ENCODE measurements at regions of chr12 and their contacts with region 1.

Region 1: GRCh38 chr12:47797441-47797840 is 22.3 kb downstream of the HDAC7 start:
- DNase-seq: peak in 2 of 3 donors; percentile 63 to 64
- ATAC-seq: peak; percentile 77 to 80 (median 78)
- H3K4me3 ChIP-seq: no peak overlapping the region
- H3K27ac ChIP-seq: no peak overlapping the region
- H3K4me1 ChIP-seq: peaks cover 0 to 6% (median 0%) of the 10 kb centered on the region in 4 donors
- H3K27me3 ChIP-seq: no peaks in the 10 kb centered on the region
- CTCF ChIP-seq: peak; percentile 50 to 59 (median 52)
- POLR2A ChIP-seq: no peak

Region 2: GRCh38 chr12:46998811-46999368 is 798.6 kb before region 1 on chr12:
- intact Hi-C with region 1: no loop called
- DNase-seq: no peak
- ATAC-seq: no peak
- H3K4me3 ChIP-seq: no peak overlapping the region
- H3K27ac ChIP-seq: no peak overlapping the region
- H3K4me1 ChIP-seq: peaks cover 0 to 3% (median under 1%) of the 10 kb centered on the region in 4 donors
- H3K27me3 ChIP-seq: no peaks in the 10 kb centered on the region
- CTCF ChIP-seq: no peak
- POLR2A ChIP-seq: no peak

Region 3: GRCh38 chr12:47837190-47838171 is 40.0 kb after region 1 on chr12:
- intact Hi-C with region 1: loop called in 1 of 2 experiments (anchors 5 kb)
- DNase-seq: peak in 2 of 3 donors; percentile 70
- ATAC-seq: peak; percentile 84 to 91 (median 89)
- H3K4me3 ChIP-seq: no peak overlapping the region
- H3K27ac ChIP-seq: no peak overlapping the region
- H3K4me1 ChIP-seq: no peaks in the 10 kb centered on the region
- H3K27me3 ChIP-seq: no peaks in the 10 kb centered on the region
- CTCF ChIP-seq: peak; percentile 88 to 94 (median 92)
- POLR2A ChIP-seq: no peak

Region 4: GRCh38 chr12:47954467-47955045 is 157.1 kb after region 1 on chr12:
- intact Hi-C with region 1: loop called in 1 of 2 experiments (anchors 5 kb)
- DNase-seq: no peak
- ATAC-seq: no peak
- H3K4me3 ChIP-seq: no peak overlapping the region
- H3K27ac ChIP-seq: no peak overlapping the region
- H3K4me1 ChIP-seq: peaks cover 0 to 9% (median 2%) of the 10 kb centered on the region in 4 donors
- H3K27me3 ChIP-seq: no peaks in the 10 kb centered on the region
- CTCF ChIP-seq: no peak
- POLR2A ChIP-seq: no peak

Measured in right lobe of liver (tissue), 6 donors.